ENCODE measurements at regions of chr16 and their contacts with region 1.

Region 1: GRCh38 chr16:47644166-47644565 is 183.0 kb downstream of the PHKB start:
- DNase-seq: no peak
- ATAC-seq: no peak
- H3K4me3 ChIP-seq: no peak overlapping the region
- H3K4me3 Mint-ChIP-seq: no peak overlapping the region
- H3K27ac ChIP-seq: no peak overlapping the region
- H3K27ac Mint-ChIP-seq: no peak overlapping the region
- H3K4me1 ChIP-seq: no peaks in the 10 kb centered on the region
- H3K4me1 Mint-ChIP-seq: peaks cover 6 to 13% (median 9%) of the 10 kb centered on the region in 3 donors
- H3K27me3 ChIP-seq: no peaks in the 10 kb centered on the region
- H3K27me3 Mint-ChIP-seq: no peaks in the 10 kb centered on the region

Region 2: GRCh38 chr16:47612711-47613110 is 31.5 kb before region 1 on chr16:
- CTCF ChIA-PET with region 1: no interaction called
- POLR2A ChIA-PET with region 1: interaction called in 1 of 2 experiments, 12 read pairs
- DNase-seq: no peak
- ATAC-seq: no peak
- H3K4me3 ChIP-seq: no peak overlapping the region
- H3K4me3 Mint-ChIP-seq: no peak overlapping the region
- H3K27ac ChIP-seq: no peak overlapping the region
- H3K27ac Mint-ChIP-seq: no peak overlapping the region
- H3K4me1 ChIP-seq: no peaks in the 10 kb centered on the region
- H3K4me1 Mint-ChIP-seq: peaks cover 0 to 15% (median 4%) of the 10 kb centered on the region in 3 donors
- H3K27me3 ChIP-seq: no peaks in the 10 kb centered on the region
- H3K27me3 Mint-ChIP-seq: no peaks in the 10 kb centered on the region

Measured in T-cell (primary cell).